K562 (cell line): ENCODE measurements at regions of chr11 and their contacts with region 1.

Region 1: DNA sequence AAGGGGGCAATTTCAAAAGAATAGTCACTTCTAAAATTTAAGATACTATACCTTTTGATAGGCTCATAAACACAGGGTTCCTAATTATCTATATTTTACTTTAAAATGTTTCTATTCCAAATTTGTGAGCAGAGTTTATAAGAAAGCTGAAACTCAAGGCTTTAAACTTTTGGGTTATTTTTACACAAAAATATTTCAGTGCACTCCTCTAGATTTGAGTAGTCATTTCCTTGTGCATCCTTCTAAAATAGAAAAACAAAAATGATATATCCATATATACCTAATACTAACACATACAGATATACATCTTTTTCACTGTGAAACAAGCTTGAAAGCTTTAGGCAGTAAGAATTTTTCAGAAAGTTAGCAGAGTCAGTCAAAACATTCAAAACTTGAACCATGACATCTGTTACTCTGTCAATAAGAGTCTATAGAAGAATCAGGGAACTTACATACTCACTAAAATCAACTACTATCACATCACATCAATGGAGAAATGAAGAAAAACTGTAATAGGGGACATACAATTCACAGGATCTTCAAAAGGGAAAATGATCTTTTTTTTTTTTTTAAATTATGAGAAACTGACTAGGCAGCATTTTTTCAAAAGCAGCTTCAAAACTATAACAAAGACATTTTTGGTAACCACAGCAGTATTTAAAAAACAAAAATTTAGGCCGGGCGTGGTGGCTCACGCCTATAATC is 5.1 kb downstream of the PHF21A start:
- DNase-seq: no peak
- ATAC-seq: no peak
- H3K4me3 ChIP-seq: peak overlapping the region; percentile 20
- H3K27ac ChIP-seq: peak overlapping the region; percentile 63; the same call in 2 of the 3 replicates
- H3K4me1 ChIP-seq: peaks cover 10 to 13% of the 10 kb centered on the region in 2 experiments; a peak in 4 of 5 replicates
- H3K27me3 ChIP-seq: no peaks in the 10 kb centered on the region
- CTCF ChIP-seq: no peak
- EP300 ChIP-seq: no peak
- POLR2A ChIP-seq: no peak
- RAD21 ChIP-seq: no peak

Region 2: GRCh38 chr11:46100670-46101069 is 15.5 kb before region 1 on chr11:
- CTCF ChIA-PET with region 1: no interaction called
- POLR2A ChIA-PET with region 1: interaction called, 13 read pairs
- in situ Hi-C with region 1: no loop called
- intact Hi-C with region 1: no loop called
- DNase-seq: no peak
- ATAC-seq: peak; percentile 11; the same call in 2 of the 3 replicates
- H3K4me3 ChIP-seq: no peak overlapping the region
- H3K27ac ChIP-seq: no peak overlapping the region
- H3K4me1 ChIP-seq: peaks cover 9 to 37% of the 10 kb centered on the region in 2 experiments; a peak in 4 of 5 replicates
- H3K27me3 ChIP-seq: no peaks in the 10 kb centered on the region
- CTCF ChIP-seq: no peak
- EP300 ChIP-seq: no peak
- POLR2A ChIP-seq: no peak
- RAD21 ChIP-seq: no peak

Region 3: GRCh38 chr11:46438211-46438610 is 322.1 kb after region 1 on chr11:
- CTCF ChIA-PET with region 1: no interaction called
- POLR2A ChIA-PET with region 1: no interaction called
- in situ Hi-C with region 1: no loop called
- intact Hi-C with region 1: no loop called
- DNase-seq: no peak
- ATAC-seq: no peak
- H3K4me3 ChIP-seq: no peak overlapping the region
- H3K27ac ChIP-seq: no peak overlapping the region
- H3K4me1 ChIP-seq: peaks cover 0 to 3% of the 10 kb centered on the region in 2 experiments; a peak in 2 of 5 replicates
- H3K27me3 ChIP-seq: no peaks in the 10 kb centered on the region
- CTCF ChIP-seq: no peak
- EP300 ChIP-seq: no peak
- POLR2A ChIP-seq: no peak
- RAD21 ChIP-seq: no peak